ENCODE measurements at regions of chr1 and their contacts with region 1.

Region 1: DNA sequence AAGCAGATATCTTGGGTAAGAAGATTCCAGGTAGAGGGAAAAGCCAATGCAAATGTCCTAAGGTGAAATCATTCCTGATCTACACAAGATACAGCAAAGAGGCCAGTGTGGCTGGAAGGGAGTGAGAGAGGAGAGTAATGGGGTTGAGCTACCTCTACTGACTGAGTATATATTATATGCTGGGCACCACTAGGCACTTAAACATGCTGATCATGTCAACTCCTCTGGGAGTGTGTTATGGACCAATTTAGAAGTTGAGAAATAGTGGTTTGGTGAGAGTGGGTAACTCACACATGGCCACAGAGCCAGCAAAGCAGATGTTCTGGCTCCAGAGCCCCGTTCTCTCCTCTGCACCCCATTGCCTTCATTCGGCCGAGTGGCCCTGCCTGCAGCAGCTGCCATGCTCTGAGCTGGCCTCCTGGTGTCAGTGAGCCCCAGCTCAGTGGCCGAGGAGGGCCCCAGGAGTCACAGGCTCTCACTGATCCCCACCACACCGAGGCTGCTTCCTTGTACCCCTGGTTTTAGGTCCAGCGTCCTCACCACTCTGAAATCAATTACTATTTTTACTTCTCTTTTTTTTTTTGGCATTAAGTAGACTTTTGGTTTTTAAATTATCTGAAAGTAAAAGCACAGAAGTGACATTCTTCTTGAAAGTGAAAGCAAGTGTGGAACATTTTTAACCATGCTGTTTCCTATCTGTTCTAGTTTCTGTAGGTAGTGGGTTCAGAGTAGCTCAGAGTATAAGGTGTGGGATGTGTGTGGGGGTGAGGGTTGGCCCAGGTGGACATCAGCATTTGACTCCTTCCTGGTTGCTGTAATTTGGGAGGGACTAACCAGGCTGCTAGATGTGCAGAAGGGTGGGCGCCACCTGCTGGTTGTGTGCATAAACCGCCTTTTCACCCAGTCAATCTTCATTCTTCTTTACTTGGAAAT is 45.8 kb upstream of the CRNN start:
- DNase-seq: peak; percentile 73
- H3K4me3 ChIP-seq: no peak overlapping the region
- H3K27ac ChIP-seq: no peak overlapping the region
- H3K4me1 ChIP-seq: no peaks in the 10 kb centered on the region
- H3K27me3 ChIP-seq: no peaks in the 10 kb centered on the region
- CTCF ChIP-seq: peak; percentile 89

Region 2: DNA sequence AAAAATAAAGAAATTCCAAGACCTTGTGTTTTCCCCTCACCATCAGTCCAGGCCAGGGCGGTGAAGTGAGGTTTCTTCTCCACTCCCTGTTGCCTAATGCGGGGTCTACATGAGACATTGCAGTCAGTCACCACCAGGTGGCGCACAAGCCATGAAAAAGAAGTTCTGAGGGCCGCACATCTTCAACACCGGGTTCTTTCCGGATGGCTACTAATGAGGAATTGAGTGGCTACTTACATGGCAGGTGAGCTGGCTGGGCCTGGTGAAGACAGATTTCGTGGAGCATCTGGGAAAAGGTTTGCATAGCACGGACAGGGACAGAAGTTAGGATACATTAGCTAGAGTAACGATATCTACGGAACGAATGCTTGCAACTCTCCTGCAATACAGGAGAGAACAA is 407.3 kb before region 1 on chr1:
- CTCF ChIA-PET with region 1: interaction called, 9 read pairs
- POLR2A ChIA-PET with region 1: no interaction called
- intact Hi-C with region 1: loop called (anchors 1 kb)
- DNase-seq: peak; percentile 85
- H3K4me3 ChIP-seq: no peak overlapping the region
- H3K27ac ChIP-seq: no peak overlapping the region
- H3K4me1 ChIP-seq: peaks cover 10% of the 10 kb centered on the region
- H3K27me3 ChIP-seq: peaks cover 48% of the 10 kb centered on the region
- CTCF ChIP-seq: peak; percentile 95

Region 3: GRCh38 chr1:152141974-152142584 is 317.8 kb before region 1 on chr1:
- CTCF ChIA-PET with region 1: interaction called, 8 read pairs
- POLR2A ChIA-PET with region 1: no interaction called
- intact Hi-C with region 1: loop called (anchors 5 kb)
- DNase-seq: peak; percentile 73
- H3K4me3 ChIP-seq: no peak overlapping the region
- H3K27ac ChIP-seq: no peak overlapping the region
- H3K4me1 ChIP-seq: no peaks in the 10 kb centered on the region
- H3K27me3 ChIP-seq: no peaks in the 10 kb centered on the region
- CTCF ChIP-seq: peak; percentile 82

Region 4: DNA sequence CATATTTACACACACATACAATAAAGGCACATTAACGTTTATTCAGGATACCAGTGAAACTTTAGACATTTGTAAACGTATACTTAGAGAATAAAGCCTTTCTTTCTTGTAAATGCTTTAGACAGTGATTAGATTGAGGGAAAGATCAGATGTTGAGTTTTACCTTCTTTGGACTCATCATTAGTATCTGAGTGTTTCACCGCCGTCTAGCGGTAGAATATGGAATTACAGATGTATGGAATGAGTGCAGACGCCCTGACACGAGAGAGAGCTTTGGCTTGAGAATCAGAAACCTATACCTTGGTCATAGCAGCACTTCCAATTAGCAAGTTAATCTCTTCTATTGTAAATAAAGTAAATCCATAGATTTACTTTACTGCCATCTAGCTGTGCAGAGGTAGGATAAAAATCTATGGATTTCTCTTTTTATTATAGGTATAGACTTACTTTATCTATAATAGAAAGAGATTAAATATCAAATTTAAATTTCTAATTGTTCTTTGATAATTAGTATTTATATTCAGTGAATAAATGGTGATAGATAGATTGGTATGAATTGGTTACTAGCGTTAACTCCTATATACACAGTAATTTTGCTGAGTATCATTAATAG is 112.6 kb before region 1 on chr1:
- CTCF ChIA-PET with region 1: interaction called, 3 read pairs
- POLR2A ChIA-PET with region 1: no interaction called
- intact Hi-C with region 1: loop called (anchors 5 kb)
- DNase-seq: peak; percentile 71
- H3K4me3 ChIP-seq: no peak overlapping the region
- H3K27ac ChIP-seq: no peak overlapping the region
- H3K4me1 ChIP-seq: no peaks in the 10 kb centered on the region
- H3K27me3 ChIP-seq: peaks cover 5% of the 10 kb centered on the region
- CTCF ChIP-seq: peak; percentile 89

Region 5: GRCh38 chr1:152398812-152399698 is 60.8 kb before region 1 on chr1:
- CTCF ChIA-PET with region 1: interaction called, 16 read pairs
- POLR2A ChIA-PET with region 1: no interaction called
- intact Hi-C with region 1: no loop called
- DNase-seq: no peak
- H3K4me3 ChIP-seq: no peak overlapping the region
- H3K27ac ChIP-seq: no peak overlapping the region
- H3K4me1 ChIP-seq: no peaks in the 10 kb centered on the region
- H3K27me3 ChIP-seq: no peaks in the 10 kb centered on the region
- CTCF ChIP-seq: peak; percentile 36; the same call in 1 of the 2 replicates

Region 6: GRCh38 chr1:152745289-152745704 is 285.4 kb after region 1 on chr1:
- CTCF ChIA-PET with region 1: no interaction called
- POLR2A ChIA-PET with region 1: no interaction called
- intact Hi-C with region 1: no loop called
- DNase-seq: peak; percentile 14
- H3K4me3 ChIP-seq: no peak overlapping the region
- H3K27ac ChIP-seq: no peak overlapping the region
- H3K4me1 ChIP-seq: no peaks in the 10 kb centered on the region
- H3K27me3 ChIP-seq: peaks cover 11% of the 10 kb centered on the region
- CTCF ChIP-seq: peak; percentile 45; the same call in 1 of the 2 replicates

Measured in A673 (cell line).